ENCODE measurements at regions of chr5 and their contacts with region 1.

Region 1: DNA sequence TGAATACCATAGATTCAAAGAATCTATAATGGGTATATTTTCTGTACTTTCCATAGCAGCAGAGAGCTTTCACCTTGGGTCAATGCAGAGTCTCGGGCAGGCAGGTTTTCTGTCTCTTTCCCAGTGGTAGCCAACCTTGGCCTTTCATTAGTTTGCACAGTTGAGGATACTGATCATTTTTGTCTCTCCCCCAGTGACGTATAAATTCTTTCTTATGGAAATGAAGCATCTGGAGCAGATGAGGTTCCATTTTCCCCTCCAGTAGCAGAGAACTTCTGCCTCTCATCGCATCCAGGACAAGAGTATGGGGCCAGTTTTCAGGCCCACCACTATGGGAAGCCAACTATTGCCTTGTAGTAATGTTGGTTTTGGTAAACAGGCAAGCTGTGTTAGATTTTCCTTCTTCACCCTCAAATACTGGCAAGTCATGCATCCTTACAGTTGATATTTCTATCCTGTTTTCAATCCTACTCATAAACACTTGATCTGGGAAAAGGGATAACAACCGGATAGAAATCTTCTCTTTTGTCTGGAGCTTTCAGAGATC is 845.2 kb upstream of the CDH18 start:
- DNase-seq: no peak
- H3K4me3 ChIP-seq: no peak overlapping the region
- H3K4me3 Mint-ChIP-seq: no peak overlapping the region
- H3K27ac ChIP-seq: no peak overlapping the region
- H3K27ac Mint-ChIP-seq: no peak overlapping the region
- H3K4me1 ChIP-seq: no peaks in the 10 kb centered on the region
- H3K4me1 Mint-ChIP-seq: no peaks in the 10 kb centered on the region
- H3K27me3 ChIP-seq: no peaks in the 10 kb centered on the region
- H3K27me3 Mint-ChIP-seq: no peaks in the 10 kb centered on the region
- CTCF ChIP-seq: no peak

Region 2: GRCh38 chr5:20985754-20986153 is 152.6 kb after region 1 on chr5:
- intact Hi-C with region 1: loop called in 1 of 2 experiments (anchors 5 kb)
- DNase-seq: no peak
- H3K4me3 ChIP-seq: no peak overlapping the region
- H3K4me3 Mint-ChIP-seq: no peak overlapping the region
- H3K27ac ChIP-seq: no peak overlapping the region
- H3K27ac Mint-ChIP-seq: no peak overlapping the region
- H3K4me1 ChIP-seq: no peaks in the 10 kb centered on the region
- H3K4me1 Mint-ChIP-seq: no peaks in the 10 kb centered on the region
- H3K27me3 ChIP-seq: no peaks in the 10 kb centered on the region
- H3K27me3 Mint-ChIP-seq: no peaks in the 10 kb centered on the region
- CTCF ChIP-seq: no peak

Measured in CD14-positive monocyte (primary cell).